ENCODE measurements at regions of chr5 and their contacts with region 1.

Region 1: GRCh38 chr5:169856571-169856970 is 123.7 kb downstream of the INSYN2B start:
- DNase-seq: no peak
- H3K4me3 ChIP-seq: no peak overlapping the region
- H3K27ac ChIP-seq: no peak overlapping the region
- H3K4me1 ChIP-seq: no peaks in the 10 kb centered on the region
- CTCF ChIP-seq: no peak

Region 2: DNA sequence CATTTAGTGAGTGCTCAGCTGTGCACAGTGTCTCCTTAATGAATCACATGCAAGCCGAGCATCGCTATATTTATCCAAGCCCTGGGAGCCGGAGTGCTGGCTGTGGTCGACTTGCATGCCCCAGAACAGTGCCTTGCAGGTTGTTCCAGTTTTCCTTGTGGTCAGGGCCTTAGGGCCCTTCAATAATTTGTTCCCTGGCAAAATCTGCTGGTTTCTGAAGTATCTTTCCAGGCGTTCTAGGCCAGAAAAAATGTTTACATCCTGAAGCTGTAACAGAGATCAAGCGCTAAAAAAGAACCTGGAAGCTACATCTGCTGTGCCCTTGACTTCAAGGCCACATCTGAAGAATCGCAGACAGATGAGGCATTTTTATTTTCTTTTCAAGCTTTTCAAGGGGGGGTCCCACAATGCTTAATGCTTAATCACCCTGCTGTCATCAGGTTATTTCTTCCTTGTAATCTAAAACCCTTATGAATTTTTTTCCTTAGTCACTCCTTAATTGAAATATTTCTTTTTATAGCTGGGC is 113.7 kb before region 1 on chr5:
- CTCF ChIA-PET with region 1: no interaction called
- POLR2A ChIA-PET with region 1: no interaction called
- intact Hi-C with region 1: no loop called
- DNase-seq: no peak
- H3K4me3 ChIP-seq: no peak overlapping the region
- H3K27ac ChIP-seq: no peak overlapping the region
- H3K4me1 ChIP-seq: no peaks in the 10 kb centered on the region
- CTCF ChIP-seq: no peak

Region 3: DNA sequence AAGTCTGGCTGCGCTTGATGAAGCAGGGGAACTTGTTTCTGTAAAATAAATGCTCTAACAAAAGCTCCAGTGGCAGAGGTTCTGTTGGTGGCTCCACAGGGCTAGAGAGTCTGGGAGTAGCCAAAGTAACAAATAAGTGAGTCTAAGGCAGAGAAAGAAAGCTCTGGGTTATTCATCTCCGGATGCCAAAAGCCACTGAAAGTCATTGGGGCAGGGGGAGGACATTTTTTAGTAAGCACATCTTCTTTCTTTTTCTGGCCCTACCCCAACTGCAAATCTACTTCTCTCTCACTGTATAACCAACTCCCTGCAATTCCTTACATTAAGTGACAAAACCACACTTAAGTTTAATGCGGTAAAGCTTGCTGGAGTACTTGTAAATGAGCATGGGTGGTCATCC is 17.9 kb before region 1 on chr5:
- CTCF ChIA-PET with region 1: no interaction called
- POLR2A ChIA-PET with region 1: interaction called, 10 read pairs
- intact Hi-C with region 1: no loop called
- DNase-seq: no peak
- H3K4me3 ChIP-seq: no peak overlapping the region
- H3K27ac ChIP-seq: no peak overlapping the region
- H3K4me1 ChIP-seq: no peaks in the 10 kb centered on the region
- CTCF ChIP-seq: no peak

Measured in OCI-LY7 (cell line).